ENCODE measurements at regions of chr11 and their contacts with region 1.

Region 1: GRCh38 chr11:106724293-106724892 is 293.9 kb downstream of the GUCY1A2 start:
- DNase-seq: no peak
- ATAC-seq: no peak
- H3K4me3 ChIP-seq: no peak overlapping the region
- H3K27ac ChIP-seq: no peak overlapping the region
- H3K4me1 ChIP-seq: no peaks in the 10 kb centered on the region
- H3K27me3 ChIP-seq: no peaks in the 10 kb centered on the region
- CTCF ChIP-seq: no peak
- EP300 ChIP-seq: no peak
- POLR2A ChIP-seq: no peak
- RAD21 ChIP-seq: no peak

Region 2: DNA sequence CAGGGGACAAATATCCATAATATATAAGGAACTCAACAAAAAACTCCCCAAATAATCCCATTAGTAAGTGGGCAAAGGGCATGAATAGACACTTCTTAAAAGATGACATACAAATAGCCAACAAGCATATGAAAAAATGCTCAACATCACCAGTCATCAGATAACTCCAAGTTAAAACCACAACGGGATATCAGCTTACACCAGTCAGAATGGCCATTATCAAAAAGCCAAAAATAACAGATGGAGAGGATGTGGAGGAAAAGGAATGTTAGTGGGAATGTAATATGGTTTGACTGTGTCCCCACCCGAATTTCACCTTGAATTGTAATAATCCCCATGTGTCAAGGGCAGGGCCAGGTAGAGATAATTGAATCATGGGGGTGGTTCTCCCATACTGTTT is 56.2 kb before region 1 on chr11:
- CTCF ChIA-PET with region 1: no interaction called
- POLR2A ChIA-PET with region 1: no interaction called
- RAD21 ChIA-PET with region 1: no interaction called
- SMC1A ChIA-PET with region 1: no interaction called
- in situ Hi-C with region 1: no loop called
- intact Hi-C with region 1: no loop called
- DNase-seq: no peak
- ATAC-seq: no peak
- H3K4me3 ChIP-seq: no peak overlapping the region
- H3K27ac ChIP-seq: no peak overlapping the region
- H3K4me1 ChIP-seq: no peaks in the 10 kb centered on the region
- H3K27me3 ChIP-seq: no peaks in the 10 kb centered on the region
- CTCF ChIP-seq: no peak
- EP300 ChIP-seq: no peak
- POLR2A ChIP-seq: no peak
- RAD21 ChIP-seq: no peak

Region 3: DNA sequence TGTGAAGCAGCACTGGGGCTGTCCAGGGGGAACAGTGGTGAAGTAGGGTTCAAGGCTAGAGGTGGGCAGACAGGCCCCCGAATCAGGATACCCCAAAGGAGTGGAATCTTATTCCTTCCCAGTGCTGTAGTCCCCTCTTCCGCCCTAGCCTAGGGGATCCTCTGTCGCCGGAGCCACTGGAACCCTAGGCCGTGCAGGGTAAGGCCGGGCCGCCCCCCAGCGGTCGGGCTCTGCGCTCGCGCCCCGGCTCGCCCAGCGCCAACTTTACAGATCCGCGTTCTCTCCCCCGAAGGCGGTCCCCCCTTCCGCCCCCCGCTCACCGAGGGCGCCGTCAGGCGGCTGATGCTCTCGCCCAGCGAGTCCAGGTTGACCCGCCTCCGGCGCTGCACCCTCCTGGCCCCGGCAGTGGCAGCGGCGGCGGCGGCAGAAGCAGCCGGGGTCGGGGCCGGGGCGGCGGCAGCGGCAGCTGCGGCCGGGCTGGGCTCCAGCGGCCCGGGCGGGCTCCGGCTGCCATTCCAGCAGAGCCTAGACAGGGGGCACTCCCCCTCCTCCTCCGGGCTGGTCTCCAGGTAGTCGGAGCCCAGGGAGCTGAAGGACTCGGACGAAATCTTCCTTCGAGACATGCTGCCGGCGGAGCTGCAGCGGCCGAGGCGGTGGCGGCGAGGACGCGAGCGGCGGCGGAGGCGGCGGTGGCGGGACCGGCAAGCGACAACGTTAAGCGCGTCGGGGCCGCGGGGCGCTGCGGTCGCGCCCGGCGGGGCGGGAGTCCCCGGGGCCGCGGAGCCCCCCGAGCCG is 293.2 kb after region 1 on chr11:
- CTCF ChIA-PET with region 1: no interaction called
- POLR2A ChIA-PET with region 1: no interaction called
- RAD21 ChIA-PET with region 1: no interaction called
- SMC1A ChIA-PET with region 1: no interaction called
- in situ Hi-C with region 1: no loop called
- intact Hi-C with region 1: loop called (anchors 1 kb)
- DNase-seq: no peak
- ATAC-seq: peak; percentile 92
- H3K4me3 ChIP-seq: no peak overlapping the region
- H3K27ac ChIP-seq: no peak overlapping the region
- H3K4me1 ChIP-seq: no peaks in the 10 kb centered on the region
- H3K27me3 ChIP-seq: peaks cover 6 to 14% of the 10 kb centered on the region in 2 experiments
- CTCF ChIP-seq: peak; percentile 35 to 52 (median 48); a peak in 5 of 6 replicates
- EP300 ChIP-seq: no peak
- POLR2A ChIP-seq: no peak
- RAD21 ChIP-seq: peak; percentile 39; the same call in 1 of the 2 replicates

Measured in GM12878 (cell line).